ENCODE measurements at regions of chr6 and their contacts with region 1.

Region 1: DNA sequence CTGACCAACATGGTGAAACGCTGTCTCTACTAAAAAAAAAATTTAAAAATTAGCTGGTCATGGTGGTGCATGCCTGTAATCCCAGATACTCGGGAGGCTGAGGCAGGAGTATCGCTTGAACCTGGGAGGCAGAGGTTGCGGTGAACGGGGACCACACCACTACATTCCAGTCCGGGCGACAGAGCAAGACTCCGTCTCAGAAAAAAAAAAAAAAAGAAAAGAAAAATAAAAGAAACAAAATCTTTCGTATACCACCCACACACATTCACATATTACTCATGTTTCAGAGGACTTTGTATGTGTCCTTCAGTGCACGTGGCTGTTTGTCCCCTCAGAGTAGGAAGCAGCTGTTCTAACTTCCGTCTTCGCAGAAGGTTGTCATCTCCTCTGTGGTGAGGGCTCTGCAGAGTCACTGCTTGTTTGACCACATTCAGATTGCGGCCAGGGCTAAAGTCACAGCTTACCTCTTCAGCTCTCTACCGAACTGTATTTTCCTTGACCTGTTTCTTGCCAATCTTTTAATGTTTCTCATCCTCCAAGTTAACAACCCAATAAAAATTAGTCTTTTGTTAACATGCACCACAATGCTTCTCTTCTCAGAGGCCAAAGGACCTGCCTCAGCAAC is 36.6 kb upstream of the HIVEP1 start:
- DNase-seq: peak; percentile 93 to 97 (median 95)
- H3K4me3 ChIP-seq: peak overlapping the region in 1 of 3 experiments; percentile 39
- H3K4me3 Mint-ChIP-seq: peak overlapping the region; percentile 31 to 39
- H3K27ac ChIP-seq: peak overlapping the region; percentile 50 to 79
- H3K27ac Mint-ChIP-seq: peak overlapping the region; percentile 83 to 95 (median 90)
- H3K4me1 ChIP-seq: peaks cover 15 to 17% of the 10 kb centered on the region in 2 donors
- H3K4me1 Mint-ChIP-seq: peaks cover 23% of the 10 kb centered on the region
- H3K27me3 ChIP-seq: no peaks in the 10 kb centered on the region
- H3K27me3 Mint-ChIP-seq: peaks cover 0 to 7% (median 5%) of the 10 kb centered on the region in 3 donors
- CTCF ChIP-seq: no peak

Region 2: GRCh38 chr6:11938285-11938890 is 37.1 kb before region 1 on chr6:
- intact Hi-C with region 1: no loop called
- DNase-seq: peak; percentile 5 to 27 (median 5)
- H3K4me3 ChIP-seq: no peak overlapping the region
- H3K4me3 Mint-ChIP-seq: peak overlapping the region; percentile 34 to 78
- H3K27ac ChIP-seq: no peak overlapping the region
- H3K27ac Mint-ChIP-seq: no peak overlapping the region
- H3K4me1 ChIP-seq: peaks cover 0 to 4% of the 10 kb centered on the region in 2 donors
- H3K4me1 Mint-ChIP-seq: peaks cover 6% of the 10 kb centered on the region
- H3K27me3 ChIP-seq: no peaks in the 10 kb centered on the region
- H3K27me3 Mint-ChIP-seq: peaks cover 0 to 2% (median 0%) of the 10 kb centered on the region in 3 donors
- CTCF ChIP-seq: no peak

Region 3: GRCh38 chr6:12011276-12012076 is 36.0 kb after region 1 on chr6:
- intact Hi-C with region 1: loop called (anchors 5 kb)
- DNase-seq: peak; percentile 94 to 99 (median 97)
- H3K4me3 ChIP-seq: peak overlapping the region in 2 of 3 experiments; percentile 54 to 95
- H3K4me3 Mint-ChIP-seq: peak overlapping the region; percentile 26 to 85
- H3K27ac ChIP-seq: peak overlapping the region in 1 of 2 donors; percentile 97
- H3K27ac Mint-ChIP-seq: peak overlapping the region in 6 of 7 donors; percentile 86 to 98 (median 96)
- H3K4me1 ChIP-seq: peaks cover 20 to 30% of the 10 kb centered on the region in 2 donors
- H3K4me1 Mint-ChIP-seq: peaks cover 35% of the 10 kb centered on the region
- H3K27me3 ChIP-seq: no peaks in the 10 kb centered on the region
- H3K27me3 Mint-ChIP-seq: peaks cover 0 to 5% (median 5%) of the 10 kb centered on the region in 3 donors
- CTCF ChIP-seq: no peak

Measured in CD14-positive monocyte (primary cell).